Mammary epithelial cell (primary cell): ENCODE measurements at regions of chr12 and their contacts with region 1.

Region 1: GRCh38 chr12:111274777-111275176 is 94.1 kb downstream of the PHETA1 start:
- DNase-seq: no peak
- H3K4me3 ChIP-seq: no peak overlapping the region
- H3K27ac ChIP-seq: no peak overlapping the region
- H3K4me1 ChIP-seq: no peaks in the 10 kb centered on the region
- H3K27me3 ChIP-seq: peaks cover 2% of the 10 kb centered on the region
- CTCF ChIP-seq: peak; percentile 35 to 43

Region 2: GRCh38 chr12:110531741-110532333 is 742.9 kb before region 1 on chr12:
- CTCF ChIA-PET with region 1: interaction called, 10 read pairs
- dilution Hi-C with region 1: no loop called
- in situ Hi-C with region 1: no loop called
- intact Hi-C with region 1: no loop called
- DNase-seq: peak; percentile 88
- H3K4me3 ChIP-seq: no peak overlapping the region
- H3K27ac ChIP-seq: peak overlapping the region; percentile 52
- H3K4me1 ChIP-seq: peaks cover 27% of the 10 kb centered on the region
- H3K27me3 ChIP-seq: no peaks in the 10 kb centered on the region
- CTCF ChIP-seq: no peak

Region 3: DNA sequence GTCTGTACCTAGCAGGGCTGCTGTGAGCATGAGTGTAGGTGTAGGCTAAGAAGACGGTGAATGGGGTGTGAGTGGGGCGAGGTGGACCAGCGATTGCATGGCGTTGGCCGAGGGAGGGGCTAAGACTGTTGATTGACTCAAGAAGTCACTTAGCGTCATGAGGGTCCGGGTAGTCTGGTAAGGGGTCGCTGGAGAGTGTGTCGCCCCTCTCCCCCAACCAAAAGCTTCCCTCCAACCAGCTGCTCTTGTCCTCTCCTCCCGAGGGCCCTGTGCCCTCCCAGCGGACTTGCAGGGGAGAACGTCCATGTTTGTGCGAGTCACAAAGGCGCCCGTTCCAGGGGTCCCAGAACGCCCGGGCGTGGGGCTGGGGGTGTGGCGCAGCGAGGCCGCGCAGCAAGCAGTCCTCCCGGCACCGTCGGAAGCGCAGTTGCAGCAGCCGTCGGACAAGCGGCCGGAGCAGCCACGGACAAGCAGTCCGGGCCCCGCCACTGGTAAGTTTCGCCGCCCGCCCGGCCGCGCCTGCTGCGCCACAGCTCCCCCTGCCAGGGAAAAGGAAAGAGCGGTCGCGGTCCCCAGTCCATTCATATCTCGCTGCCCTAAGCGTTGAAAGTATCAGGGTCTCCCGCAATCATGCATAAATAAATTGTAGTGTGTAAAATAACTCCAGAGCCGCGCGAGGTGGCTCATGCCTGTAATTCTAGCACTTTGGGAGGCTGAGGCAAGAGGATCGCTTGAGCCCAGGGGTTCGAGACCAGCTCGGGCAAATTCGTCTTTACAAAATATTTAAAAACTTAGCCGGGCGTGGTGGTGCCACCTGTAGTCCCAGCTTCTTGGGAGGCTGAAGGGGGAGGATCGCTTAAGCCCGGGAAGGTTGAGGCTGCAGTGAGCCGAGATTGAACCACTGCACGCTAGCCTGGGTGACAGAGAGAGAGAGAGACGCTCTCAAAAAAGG is 427.9 kb before region 1 on chr12 and contains the start of gene CCDC63:
- CTCF ChIA-PET with region 1: no interaction called
- dilution Hi-C with region 1: no loop called
- in situ Hi-C with region 1: no loop called
- intact Hi-C with region 1: no loop called
- DNase-seq: no peak
- H3K4me3 ChIP-seq: no peak within 1 kb of the TSS
- H3K27ac ChIP-seq: no peak within 1 kb of the TSS
- H3K4me1 ChIP-seq: peaks cover 10% of the 10 kb centered on the region
- H3K27me3 ChIP-seq: no peaks in the 10 kb centered on the region
- CTCF ChIP-seq: peak in 1 of 2 donors; percentile 57
- total RNA-seq, gene CCDC63: not detected

Region 4: DNA sequence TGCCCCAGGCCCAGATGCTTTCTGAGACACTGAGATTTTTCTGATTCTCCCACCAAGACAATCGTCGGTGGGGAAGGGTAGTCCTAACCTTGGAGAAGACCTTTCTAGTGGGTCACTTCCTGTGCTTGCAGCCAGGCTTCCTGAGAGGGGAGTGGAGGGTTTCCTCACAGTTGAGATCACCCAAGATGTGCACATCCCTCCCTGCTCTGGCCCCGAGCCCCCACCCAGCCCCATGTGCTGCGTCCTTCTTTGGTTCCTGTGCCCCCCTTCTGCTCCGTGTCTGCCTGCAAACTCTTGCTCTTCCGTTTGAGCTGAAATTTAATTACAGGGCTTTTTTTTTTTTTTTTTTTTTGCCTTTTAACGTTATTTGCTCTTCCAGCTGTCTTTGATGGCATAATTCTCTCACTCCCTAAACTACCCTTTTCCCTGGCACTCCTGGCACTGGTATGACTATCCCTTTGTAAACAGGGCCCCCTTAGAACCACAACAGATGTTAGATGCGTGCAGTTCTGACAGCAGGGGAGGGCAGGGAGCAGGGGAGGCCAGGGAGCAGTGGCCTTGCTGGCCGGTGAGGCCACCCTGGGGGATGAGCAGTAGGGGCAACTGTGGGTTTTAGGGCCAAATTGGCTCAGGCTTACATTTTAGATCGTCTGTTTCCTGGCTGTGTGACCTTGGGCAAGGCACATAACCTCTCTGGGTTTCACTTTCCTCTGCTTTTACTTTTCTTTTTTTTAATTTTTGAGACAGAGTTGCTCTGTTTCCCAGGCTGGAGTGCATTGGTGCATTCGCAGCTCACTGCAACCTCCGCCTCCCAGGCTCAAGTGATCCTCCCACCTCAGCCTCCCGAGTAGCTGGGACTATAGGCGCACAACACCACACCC is 50.4 kb before region 1 on chr12:
- CTCF ChIA-PET with region 1: interaction called, 7 read pairs
- dilution Hi-C with region 1: loop called (anchors 5 kb)
- in situ Hi-C with region 1: no loop called
- intact Hi-C with region 1: no loop called
- DNase-seq: no peak
- H3K4me3 ChIP-seq: no peak overlapping the region
- H3K27ac ChIP-seq: no peak overlapping the region
- H3K4me1 ChIP-seq: no peaks in the 10 kb centered on the region
- H3K27me3 ChIP-seq: no peaks in the 10 kb centered on the region
- CTCF ChIP-seq: no peak

Region 5: DNA sequence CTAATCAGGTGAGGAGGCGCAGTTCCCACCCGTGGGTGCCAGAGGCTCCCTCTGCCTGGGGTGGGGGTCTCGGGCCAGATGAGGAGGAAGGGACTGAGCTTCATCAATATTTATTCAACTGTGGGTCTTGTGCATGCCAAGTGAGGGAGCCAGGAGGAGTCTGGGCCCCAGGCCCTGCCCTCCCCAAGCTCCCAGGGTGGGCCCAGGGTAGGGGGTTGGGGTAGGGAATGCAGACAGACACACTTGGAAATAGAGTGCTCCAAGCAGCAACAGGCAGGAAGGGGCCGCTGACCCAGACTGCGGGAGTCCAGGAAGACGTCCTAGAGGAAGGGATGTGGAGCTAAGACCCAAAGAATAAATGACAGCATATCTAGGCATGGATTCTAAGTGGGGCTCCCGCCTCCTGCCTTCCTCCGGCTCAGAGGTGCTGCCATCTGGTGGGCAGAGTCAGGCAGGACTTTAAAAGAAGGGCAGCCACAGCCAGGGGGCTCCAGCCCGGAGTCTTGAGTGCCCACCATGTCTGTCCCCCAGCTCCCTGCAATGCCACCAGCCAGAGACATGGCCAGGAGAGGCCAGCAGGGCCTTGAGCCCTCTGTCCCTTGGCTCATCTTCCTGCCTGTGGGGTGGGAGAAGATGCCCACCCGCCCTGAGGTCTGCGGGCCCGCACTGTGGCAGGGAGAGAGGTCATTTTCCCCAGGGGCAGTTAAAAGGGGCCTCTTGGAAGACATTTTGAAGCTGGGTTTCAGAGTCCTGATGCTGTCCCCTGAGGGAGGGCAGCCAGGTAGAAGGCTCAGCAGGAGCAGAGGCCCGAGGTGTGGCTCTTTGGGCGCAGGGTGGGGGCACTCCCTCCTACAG is 24.0 kb after region 1 on chr12:
- CTCF ChIA-PET with region 1: interaction called, 11 read pairs
- dilution Hi-C with region 1: no loop called
- in situ Hi-C with region 1: no loop called
- intact Hi-C with region 1: no loop called
- DNase-seq: peak; percentile 22
- H3K4me3 ChIP-seq: no peak overlapping the region
- H3K27ac ChIP-seq: no peak overlapping the region
- H3K4me1 ChIP-seq: no peaks in the 10 kb centered on the region
- H3K27me3 ChIP-seq: no peaks in the 10 kb centered on the region
- CTCF ChIP-seq: peak; percentile 72 to 85

Region 6: GRCh38 chr12:111359231-111359913 is 84.6 kb after region 1 on chr12:
- CTCF ChIA-PET with region 1: no interaction called
- dilution Hi-C with region 1: no loop called
- in situ Hi-C with region 1: no loop called
- intact Hi-C with region 1: no loop called
- DNase-seq: no peak
- H3K4me3 ChIP-seq: no peak overlapping the region
- H3K27ac ChIP-seq: no peak overlapping the region
- H3K4me1 ChIP-seq: no peaks in the 10 kb centered on the region
- H3K27me3 ChIP-seq: no peaks in the 10 kb centered on the region
- CTCF ChIP-seq: no peak